Vagina (tissue), 2 donors: ENCODE measurements at regions of chr20 and their contacts with region 1.

Region 1: DNA sequence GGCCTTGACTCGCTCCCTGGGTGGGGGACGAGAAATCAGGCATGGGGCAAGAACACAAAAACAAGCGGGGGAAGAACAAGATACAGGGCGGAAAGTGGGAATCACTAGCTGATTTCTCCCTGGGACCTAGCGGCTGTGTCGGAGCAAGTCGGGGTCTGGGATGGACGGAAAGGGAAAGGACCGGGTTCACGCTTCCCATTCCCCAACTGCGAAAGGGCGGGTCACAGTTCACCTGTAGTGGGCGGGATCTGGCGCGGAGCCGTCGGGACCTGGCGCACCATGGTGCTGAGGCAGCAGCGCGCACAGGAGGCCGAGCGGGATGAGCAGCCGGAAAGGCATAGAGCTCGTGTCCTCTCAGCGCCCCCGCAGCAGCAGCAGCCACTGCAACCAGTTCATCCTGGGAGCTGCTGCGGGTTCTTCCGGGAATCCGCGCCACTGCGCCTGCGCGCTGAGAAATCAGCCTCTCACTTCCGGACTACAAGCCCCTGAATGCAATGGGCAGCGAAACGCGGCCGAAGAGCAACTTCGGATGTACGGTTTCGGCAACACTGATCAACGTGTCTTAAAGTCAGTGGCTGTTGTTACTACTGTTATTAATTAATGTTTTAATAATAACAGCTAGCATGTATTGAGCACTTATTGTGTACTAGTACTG is at the start of gene EDEM2:
- DNase-seq: peak in 1 of 2 donors; percentile 93
- H3K4me3 ChIP-seq: peak within 1 kb of the TSS; percentile 85 to 91
- H3K27ac ChIP-seq: peak within 1 kb of the TSS; percentile 82
- H3K4me1 ChIP-seq: peaks cover 26% of the 10 kb centered on the region
- H3K27me3 ChIP-seq: no peaks in the 10 kb centered on the region
- CTCF ChIP-seq: no peak
- POLR2A ChIP-seq: peak in 1 of 2 donors; percentile 6
- total RNA-seq, gene EDEM2: 12.8 TPM

Region 2: GRCh38 chr20:35207950-35208611 is 61.0 kb after region 1 on chr20:
- intact Hi-C with region 1: loop called (anchors 5 kb)
- DNase-seq: no peak
- H3K4me3 ChIP-seq: peak overlapping the region in 1 of 2 donors; percentile 20
- H3K27ac ChIP-seq: peak overlapping the region; percentile 58
- H3K4me1 ChIP-seq: peaks cover 7% of the 10 kb centered on the region
- H3K27me3 ChIP-seq: no peaks in the 10 kb centered on the region
- CTCF ChIP-seq: peak; percentile 78 to 88 (median 81)
- POLR2A ChIP-seq: no peak

Region 3: GRCh38 chr20:35226775-35227681 is 80.0 kb after region 1 on chr20:
- intact Hi-C with region 1: no loop called
- DNase-seq: no peak
- H3K4me3 ChIP-seq: peak overlapping the region in 1 of 2 donors; percentile 29
- H3K27ac ChIP-seq: no peak overlapping the region
- H3K4me1 ChIP-seq: peaks cover 8% of the 10 kb centered on the region
- H3K27me3 ChIP-seq: no peaks in the 10 kb centered on the region
- CTCF ChIP-seq: no peak
- POLR2A ChIP-seq: no peak

Region 4: DNA sequence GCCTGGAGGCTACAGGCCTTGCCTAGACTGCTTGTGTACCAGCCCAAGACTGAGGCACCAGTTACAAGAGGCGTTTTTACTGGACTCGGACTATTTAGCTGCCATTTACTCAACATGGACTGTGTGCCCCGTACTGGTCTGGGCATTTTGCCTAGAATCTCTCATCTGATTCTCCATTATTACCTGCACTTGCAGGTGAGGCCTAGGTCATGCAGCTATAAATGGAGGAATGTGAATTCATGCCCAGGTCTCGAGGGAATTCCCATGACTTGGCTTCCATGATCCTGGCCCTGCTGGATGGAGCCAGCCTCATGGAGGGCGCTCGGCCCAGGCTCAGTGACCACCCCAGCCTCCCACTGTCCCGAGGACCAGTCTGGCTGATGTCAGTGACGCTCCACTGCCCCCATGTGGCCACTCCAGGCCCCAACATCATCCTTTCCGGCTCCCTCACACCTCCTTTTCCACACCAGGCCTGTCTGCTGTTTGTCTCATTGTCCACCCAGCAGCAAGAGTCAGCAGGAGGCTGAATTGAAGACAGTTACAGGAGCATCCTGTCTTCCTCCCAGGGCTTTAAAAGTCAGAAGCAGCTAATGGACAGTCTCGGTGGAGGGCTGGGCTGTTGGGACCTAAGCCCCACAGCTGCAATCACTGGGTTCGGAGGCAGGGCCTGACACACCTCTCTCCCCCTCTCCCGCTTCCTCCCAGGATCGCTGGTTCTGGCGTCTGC is 122.2 kb after region 1 on chr20:
- intact Hi-C with region 1: loop called (anchors 5 kb)
- DNase-seq: no peak
- H3K4me3 ChIP-seq: no peak overlapping the region
- H3K27ac ChIP-seq: no peak overlapping the region
- H3K4me1 ChIP-seq: no peaks in the 10 kb centered on the region
- H3K27me3 ChIP-seq: no peaks in the 10 kb centered on the region
- CTCF ChIP-seq: peak; percentile 7 to 64 (median 37)
- POLR2A ChIP-seq: no peak